Left ventricle myocardium superior (tissue), 1 donor: ENCODE measurements at regions of chr5 and their contacts with region 1.

Region 1: DNA sequence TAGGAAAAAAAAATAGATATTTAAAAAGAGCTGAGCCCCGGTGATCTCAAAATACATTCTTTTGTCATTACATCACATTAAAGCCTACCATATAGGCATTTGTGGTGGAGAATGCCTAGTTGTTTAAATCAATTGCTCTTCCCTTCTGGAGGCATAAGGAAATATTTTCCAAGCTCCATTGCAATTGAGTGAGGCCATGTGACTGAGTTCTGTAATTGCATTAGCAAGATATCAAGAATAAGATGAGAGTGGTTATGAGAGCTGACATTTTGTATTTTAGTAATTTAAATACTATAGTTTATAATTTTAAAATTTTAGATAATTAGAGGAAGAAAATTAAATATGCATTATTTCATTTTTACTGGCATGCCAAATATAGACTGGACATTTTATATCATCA is 1195.9 kb downstream of the DTWD2 start:
- DNase-seq: no peak
- ATAC-seq: no peak

Region 2: GRCh38 chr5:117590944-117591343 is 201.5 kb before region 1 on chr5:
- intact Hi-C with region 1: loop called (anchors 5 kb)
- DNase-seq: no peak
- ATAC-seq: no peak

Region 3: GRCh38 chr5:117942861-117943519 is 150.5 kb after region 1 on chr5:
- intact Hi-C with region 1: no loop called
- DNase-seq: no peak
- ATAC-seq: no peak

Region 4: DNA sequence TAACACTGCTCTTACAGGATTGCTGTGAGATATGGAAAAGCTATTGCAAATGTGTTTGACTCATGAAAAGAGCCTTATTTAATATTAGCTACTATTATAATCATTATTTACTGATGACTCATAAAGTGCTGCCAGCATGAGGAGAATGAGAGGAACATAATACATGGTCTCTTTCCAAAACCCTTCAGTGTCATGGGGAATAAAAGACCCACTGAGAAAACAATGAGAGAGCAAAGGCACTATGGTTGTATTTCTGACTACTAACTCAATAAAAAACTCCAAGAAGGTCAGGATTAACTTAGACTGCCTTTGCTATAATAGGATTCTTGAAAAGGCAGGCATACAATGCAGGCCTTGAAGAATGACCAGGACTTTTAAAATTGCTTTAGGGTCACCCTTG is 562.3 kb after region 1 on chr5:
- intact Hi-C with region 1: no loop called
- DNase-seq: no peak
- ATAC-seq: no peak